ENCODE measurements at regions of chr7 and their contacts with region 1.

Region 1: GRCh38 chr7:130982160-130982638 is 248.2 kb upstream of the KLF14 start:
- DNase-seq: peak in 2 of 5 donors; percentile 44 to 56
- H3K4me3 ChIP-seq: no peak overlapping the region
- H3K4me3 Mint-ChIP-seq: no peak overlapping the region
- H3K27ac ChIP-seq: no peak overlapping the region
- H3K27ac Mint-ChIP-seq: no peak overlapping the region
- H3K4me1 ChIP-seq: peaks cover 69% of the 10 kb centered on the region
- H3K4me1 Mint-ChIP-seq: peaks cover 14 to 40% (median 20%) of the 10 kb centered on the region in 3 donors
- H3K27me3 ChIP-seq: no peaks in the 10 kb centered on the region
- H3K27me3 Mint-ChIP-seq: no peaks in the 10 kb centered on the region

Region 2: GRCh38 chr7:130904031-130904757 is 78.0 kb before region 1 on chr7:
- CTCF ChIA-PET with region 1: interaction called, 10 read pairs
- POLR2A ChIA-PET with region 1: no interaction called
- DNase-seq: no peak
- H3K4me3 ChIP-seq: no peak overlapping the region
- H3K4me3 Mint-ChIP-seq: peak overlapping the region in 4 of 7 donors; percentile 17 to 59 (median 58)
- H3K27ac ChIP-seq: peak overlapping the region; percentile 12
- H3K27ac Mint-ChIP-seq: peak overlapping the region; percentile 51 to 93 (median 82)
- H3K4me1 ChIP-seq: peaks cover 18% of the 10 kb centered on the region
- H3K4me1 Mint-ChIP-seq: peaks cover 58 to 92% (median 86%) of the 10 kb centered on the region in 3 donors
- H3K27me3 ChIP-seq: no peaks in the 10 kb centered on the region
- H3K27me3 Mint-ChIP-seq: peaks cover 0 to 4% of the 10 kb centered on the region in 2 donors

Region 3: GRCh38 chr7:130941322-130942210 is 40.6 kb before region 1 on chr7:
- CTCF ChIA-PET with region 1: interaction called, 11 read pairs
- POLR2A ChIA-PET with region 1: no interaction called
- DNase-seq: peak in 3 of 5 donors; percentile 51 to 64 (median 56)
- H3K4me3 ChIP-seq: peak overlapping the region; percentile 52
- H3K4me3 Mint-ChIP-seq: peak overlapping the region; percentile 85 to 98 (median 93)
- H3K27ac ChIP-seq: peak overlapping the region; percentile 77
- H3K27ac Mint-ChIP-seq: peak overlapping the region; percentile 87 to 99 (median 96)
- H3K4me1 ChIP-seq: peaks cover 85% of the 10 kb centered on the region
- H3K4me1 Mint-ChIP-seq: peaks cover 88 to 97% (median 96%) of the 10 kb centered on the region in 3 donors
- H3K27me3 ChIP-seq: no peaks in the 10 kb centered on the region
- H3K27me3 Mint-ChIP-seq: peaks cover 0 to 4% of the 10 kb centered on the region in 2 donors

Region 4: GRCh38 chr7:130961128-130961601 is 21.0 kb before region 1 on chr7:
- CTCF ChIA-PET with region 1: interaction called, 17 read pairs
- POLR2A ChIA-PET with region 1: interaction called, 3 read pairs
- DNase-seq: peak; percentile 55 to 86 (median 78)
- H3K4me3 ChIP-seq: peak overlapping the region; percentile 57
- H3K4me3 Mint-ChIP-seq: peak overlapping the region; percentile 87 to 92 (median 88)
- H3K27ac ChIP-seq: peak overlapping the region; percentile 69
- H3K27ac Mint-ChIP-seq: peak overlapping the region in 7 of 8 donors; percentile 95 to 100 (median 99)
- H3K4me1 ChIP-seq: peaks cover 54% of the 10 kb centered on the region
- H3K4me1 Mint-ChIP-seq: peaks cover 4 to 66% (median 7%) of the 10 kb centered on the region in 3 donors
- H3K27me3 ChIP-seq: no peaks in the 10 kb centered on the region
- H3K27me3 Mint-ChIP-seq: no peaks in the 10 kb centered on the region

Region 5: DNA sequence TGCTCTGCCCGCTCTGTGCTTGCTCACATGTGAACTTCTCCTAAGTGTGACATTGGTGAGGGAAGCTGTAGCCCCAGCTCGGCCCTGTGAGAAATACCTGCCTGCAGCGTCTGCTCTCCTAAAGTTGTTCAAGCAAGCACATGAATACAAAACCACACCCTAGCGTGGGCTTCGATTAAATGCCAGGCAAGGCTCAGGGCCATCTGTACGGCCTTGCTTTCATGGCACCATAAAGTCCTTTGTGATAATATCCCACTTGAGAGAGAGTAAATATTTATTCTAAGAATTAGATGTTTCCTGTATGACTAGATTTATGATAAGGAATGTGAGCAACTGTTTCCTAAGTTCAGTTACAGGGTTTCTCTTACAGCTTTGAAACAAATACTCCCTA is 14.6 kb after region 1 on chr7:
- CTCF ChIA-PET with region 1: interaction called, 12 read pairs
- POLR2A ChIA-PET with region 1: no interaction called
- DNase-seq: no peak
- H3K4me3 ChIP-seq: no peak overlapping the region
- H3K4me3 Mint-ChIP-seq: peak overlapping the region; percentile 7 to 72 (median 49)
- H3K27ac ChIP-seq: no peak overlapping the region
- H3K27ac Mint-ChIP-seq: peak overlapping the region; percentile 63 to 94 (median 85)
- H3K4me1 ChIP-seq: peaks cover 78% of the 10 kb centered on the region
- H3K4me1 Mint-ChIP-seq: peaks cover 73 to 92% (median 91%) of the 10 kb centered on the region in 3 donors
- H3K27me3 ChIP-seq: no peaks in the 10 kb centered on the region
- H3K27me3 Mint-ChIP-seq: no peaks in the 10 kb centered on the region

Region 6: DNA sequence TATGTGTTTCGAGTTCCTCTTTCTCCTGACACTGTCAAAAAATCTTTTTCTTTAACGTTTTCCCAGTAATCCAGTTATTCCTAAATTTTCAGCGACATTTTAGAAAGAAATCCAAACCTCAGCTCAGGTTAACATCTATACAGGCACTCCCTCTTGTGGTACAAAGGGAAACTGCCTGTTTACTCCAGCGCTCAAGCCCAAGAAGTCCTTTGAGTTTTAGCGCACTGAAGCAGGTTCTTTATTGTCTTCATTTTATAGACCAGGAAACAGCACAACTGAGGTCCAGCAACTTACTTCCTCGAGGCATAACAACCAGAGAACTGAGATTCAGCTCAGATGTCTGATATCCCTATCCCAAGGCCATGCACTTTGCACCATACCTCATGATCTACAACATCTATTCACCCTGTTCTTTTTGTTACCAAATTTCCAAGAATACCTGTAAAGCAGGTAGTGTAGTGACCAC is 58.3 kb after region 1 on chr7:
- CTCF ChIA-PET with region 1: interaction called, 11 read pairs
- POLR2A ChIA-PET with region 1: interaction called, 3 read pairs
- DNase-seq: peak in 3 of 5 donors; percentile 39 to 61 (median 53)
- H3K4me3 ChIP-seq: no peak overlapping the region
- H3K4me3 Mint-ChIP-seq: peak overlapping the region in 5 of 7 donors; percentile 1 to 64 (median 34)
- H3K27ac ChIP-seq: no peak overlapping the region
- H3K27ac Mint-ChIP-seq: peak overlapping the region; percentile 27 to 86 (median 62)
- H3K4me1 ChIP-seq: peaks cover 29% of the 10 kb centered on the region
- H3K4me1 Mint-ChIP-seq: peaks cover 64 to 78% (median 75%) of the 10 kb centered on the region in 3 donors
- H3K27me3 ChIP-seq: no peaks in the 10 kb centered on the region
- H3K27me3 Mint-ChIP-seq: no peaks in the 10 kb centered on the region

Region 7: DNA sequence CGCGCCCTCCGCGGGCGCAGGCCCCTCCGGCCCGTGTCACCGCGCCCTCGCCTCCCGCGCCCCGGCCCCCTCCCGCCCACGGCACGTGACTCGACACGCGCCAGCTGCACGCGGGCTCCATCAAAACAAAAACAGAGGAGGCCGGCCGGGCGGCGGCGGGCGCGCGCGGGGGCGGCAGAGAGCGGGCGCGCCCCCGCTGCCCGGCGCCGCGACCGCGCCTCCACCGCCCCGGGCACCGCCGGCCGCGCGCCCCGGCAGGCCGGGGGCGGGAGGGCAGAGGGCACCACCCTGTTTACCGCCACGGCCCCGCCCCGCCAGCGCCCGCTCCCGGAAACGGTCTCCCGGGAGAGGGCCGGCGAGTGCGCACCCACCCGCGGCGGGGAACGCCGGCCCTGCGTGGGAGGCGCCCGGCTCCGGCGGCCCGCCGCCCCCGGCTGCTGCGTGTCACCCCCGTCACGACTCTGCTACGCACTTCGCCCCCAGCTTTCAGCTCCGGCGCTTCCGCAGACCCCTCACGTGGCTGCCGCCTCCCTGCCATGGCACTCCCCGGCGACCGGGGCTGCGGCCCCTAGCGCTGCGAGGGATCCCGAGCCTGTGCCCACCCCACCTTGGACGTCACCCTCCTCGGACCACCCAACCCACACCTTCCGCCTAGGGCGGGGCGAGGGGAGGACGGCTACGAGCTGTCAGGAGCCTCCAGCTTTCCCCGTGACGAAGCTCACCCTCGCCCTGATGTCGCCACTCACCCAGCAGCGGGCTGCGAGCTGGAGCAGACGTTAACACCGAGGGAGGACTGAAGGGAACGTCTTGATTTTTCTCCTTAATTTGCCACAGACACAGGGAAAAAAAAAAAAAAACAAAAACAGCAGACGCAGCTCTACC is 123.8 kb after region 1 on chr7:
- CTCF ChIA-PET with region 1: no interaction called
- POLR2A ChIA-PET with region 1: no interaction called
- DNase-seq: peak; percentile 83 to 96 (median 92)
- H3K4me3 ChIP-seq: peak overlapping the region; percentile 96
- H3K4me3 Mint-ChIP-seq: peak overlapping the region; percentile 90 to 100 (median 98)
- H3K27ac ChIP-seq: peak overlapping the region; percentile 99
- H3K27ac Mint-ChIP-seq: peak overlapping the region; percentile 94 to 100 (median 100)
- H3K4me1 ChIP-seq: peaks cover 65% of the 10 kb centered on the region
- H3K4me1 Mint-ChIP-seq: peaks cover 59 to 76% (median 71%) of the 10 kb centered on the region in 3 donors
- H3K27me3 ChIP-seq: no peaks in the 10 kb centered on the region
- H3K27me3 Mint-ChIP-seq: peaks cover 0 to 17% of the 10 kb centered on the region in 2 donors

Measured in CD8-positive, alpha-beta memory T cell (primary cell).